ENCODE measurements at regions of chr10 and their contacts with region 1.

Region 1: DNA sequence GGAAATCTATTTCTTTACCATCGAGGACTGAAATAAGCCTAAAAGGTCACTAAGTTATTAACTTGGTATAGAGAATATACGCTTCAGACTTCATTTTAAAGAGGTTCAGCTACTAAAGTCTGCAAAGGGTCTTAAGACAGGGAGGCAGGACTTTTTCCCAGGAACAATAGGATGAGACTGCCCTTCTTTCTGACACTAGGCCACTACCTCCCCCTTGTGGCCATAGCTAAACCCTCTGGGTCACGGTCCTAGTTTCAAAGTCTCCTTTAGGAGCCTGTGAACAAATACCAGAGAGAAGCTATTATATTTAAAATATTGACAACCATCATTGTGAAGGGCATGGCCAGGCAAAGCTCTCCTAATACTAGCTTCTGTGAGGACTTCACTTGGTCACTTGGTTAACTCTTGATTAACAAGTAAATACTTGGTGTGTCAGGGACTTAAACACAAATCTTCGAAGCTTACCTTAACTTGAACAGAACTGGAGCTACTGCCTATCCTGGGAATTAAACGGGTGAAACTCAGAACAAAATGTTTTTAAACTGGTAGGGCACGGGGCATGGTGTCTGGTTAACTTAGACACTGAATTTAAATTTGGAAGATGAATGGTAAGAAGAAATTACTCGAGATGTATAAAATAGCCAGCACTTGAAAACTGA is 75.6 kb downstream of the CCDC6 start:
- DNase-seq: peak; percentile 29 to 70
- H3K4me3 ChIP-seq: no peak overlapping the region
- H3K27ac ChIP-seq: no peak overlapping the region
- H3K4me1 ChIP-seq: peaks cover 0 to 8% (median 3%) of the 10 kb centered on the region in 4 experiments; a peak in 3 of 7 replicates
- H3K27me3 ChIP-seq: no peaks in the 10 kb centered on the region
- CTCF ChIP-seq: peak; percentile 67 to 84 (median 78)
- EP300 ChIP-seq: no peak
- POLR2A ChIP-seq: no peak
- RAD21 ChIP-seq: peak; percentile 83

Region 2: GRCh38 chr10:59657724-59658123 is 173.0 kb before region 1 on chr10:
- CTCF ChIA-PET with region 1: no interaction called
- POLR2A ChIA-PET with region 1: no interaction called
- DNase-seq: no peak
- H3K4me3 ChIP-seq: no peak overlapping the region
- H3K27ac ChIP-seq: no peak overlapping the region
- H3K4me1 ChIP-seq: peaks cover 0 to 9% (median 7%) of the 10 kb centered on the region in 4 experiments; a peak in 3 of 7 replicates
- H3K27me3 ChIP-seq: no peaks in the 10 kb centered on the region; a peak in 1 of 7 replicates
- CTCF ChIP-seq: no peak
- EP300 ChIP-seq: no peak
- POLR2A ChIP-seq: no peak
- RAD21 ChIP-seq: no peak

Region 3: DNA sequence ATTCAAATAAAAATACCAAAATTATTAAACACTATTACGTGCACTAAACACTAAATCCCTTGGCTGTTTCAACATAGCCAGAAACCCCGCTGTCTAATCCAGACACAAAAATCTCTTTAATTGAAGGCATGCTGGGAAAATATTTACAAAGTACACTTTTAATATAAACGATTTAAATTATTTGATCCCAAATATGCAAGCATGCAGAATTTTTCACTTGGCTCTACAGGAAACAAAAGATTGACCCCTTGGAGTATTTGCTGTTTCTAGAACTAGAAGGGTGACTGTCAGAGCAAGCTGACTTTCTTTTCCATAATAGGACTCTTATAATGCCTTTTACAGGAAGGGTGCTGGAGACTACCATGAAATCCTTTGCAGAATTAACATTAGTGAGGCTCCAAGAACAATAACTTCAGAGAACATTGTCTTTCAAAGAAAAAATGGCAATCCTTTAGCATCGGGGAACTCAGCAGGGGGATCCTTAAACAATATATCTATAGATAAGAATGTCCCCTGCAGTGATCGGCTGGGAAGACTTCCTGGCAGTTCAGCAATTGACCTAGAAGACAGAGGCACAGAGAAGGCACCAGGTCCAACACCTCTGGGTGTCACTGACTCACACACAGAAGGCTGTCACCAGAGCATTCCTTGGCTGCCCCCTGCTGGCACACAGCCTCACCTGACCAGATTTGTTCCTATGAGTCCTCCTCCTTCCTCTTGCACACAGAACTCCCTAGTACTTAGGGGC is 21.7 kb before region 1 on chr10:
- CTCF ChIA-PET with region 1: interaction called, 26 read pairs
- POLR2A ChIA-PET with region 1: no interaction called
- DNase-seq: peak; percentile 43 to 72
- H3K4me3 ChIP-seq: no peak overlapping the region
- H3K27ac ChIP-seq: no peak overlapping the region
- H3K4me1 ChIP-seq: peaks cover 0 to 10% (median 2%) of the 10 kb centered on the region in 4 experiments; a peak in 5 of 7 replicates
- H3K27me3 ChIP-seq: no peaks in the 10 kb centered on the region; a peak in 1 of 7 replicates
- CTCF ChIP-seq: peak; percentile 58 to 87 (median 84)
- EP300 ChIP-seq: no peak
- POLR2A ChIP-seq: no peak
- RAD21 ChIP-seq: peak; percentile 64 to 71

Region 4: DNA sequence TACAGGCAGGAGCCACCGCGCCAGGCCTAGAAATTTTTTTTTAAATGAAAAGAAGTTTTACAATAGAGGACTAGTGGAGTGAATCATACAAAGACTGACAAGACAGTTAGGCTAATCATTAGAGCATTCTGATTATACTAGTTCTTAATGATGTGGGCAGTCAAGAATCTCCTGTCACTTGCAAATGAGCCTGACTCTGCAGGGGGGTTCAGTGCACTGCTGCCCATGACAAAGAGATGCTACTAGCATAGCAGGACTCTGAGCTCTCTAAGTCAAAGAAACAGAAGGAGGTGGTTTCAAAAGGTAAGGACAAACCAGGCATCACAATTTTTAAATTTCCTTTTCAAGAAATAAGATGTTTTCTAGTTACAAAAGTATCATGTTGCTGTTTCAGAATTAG is 16.6 kb after region 1 on chr10:
- CTCF ChIA-PET with region 1: interaction called, 68 read pairs
- POLR2A ChIA-PET with region 1: interaction called, 17 read pairs
- DNase-seq: peak; percentile 61 to 85
- H3K4me3 ChIP-seq: peak overlapping the region in 1 of 4 experiments; percentile 32; a peak in 2 of 8 replicates
- H3K27ac ChIP-seq: no peak overlapping the region
- H3K4me1 ChIP-seq: peaks cover 3 to 25% (median 16%) of the 10 kb centered on the region in 4 experiments
- H3K27me3 ChIP-seq: no peaks in the 10 kb centered on the region
- CTCF ChIP-seq: no peak
- EP300 ChIP-seq: peak in 1 of 2 experiments; percentile 58; a peak in 1 of 3 replicates
- POLR2A ChIP-seq: 0 out of 3 replicates have a peak, but pooled peaks of 1 of the 2 experiments have one; percentile 23
- RAD21 ChIP-seq: no peak

Region 5: DNA sequence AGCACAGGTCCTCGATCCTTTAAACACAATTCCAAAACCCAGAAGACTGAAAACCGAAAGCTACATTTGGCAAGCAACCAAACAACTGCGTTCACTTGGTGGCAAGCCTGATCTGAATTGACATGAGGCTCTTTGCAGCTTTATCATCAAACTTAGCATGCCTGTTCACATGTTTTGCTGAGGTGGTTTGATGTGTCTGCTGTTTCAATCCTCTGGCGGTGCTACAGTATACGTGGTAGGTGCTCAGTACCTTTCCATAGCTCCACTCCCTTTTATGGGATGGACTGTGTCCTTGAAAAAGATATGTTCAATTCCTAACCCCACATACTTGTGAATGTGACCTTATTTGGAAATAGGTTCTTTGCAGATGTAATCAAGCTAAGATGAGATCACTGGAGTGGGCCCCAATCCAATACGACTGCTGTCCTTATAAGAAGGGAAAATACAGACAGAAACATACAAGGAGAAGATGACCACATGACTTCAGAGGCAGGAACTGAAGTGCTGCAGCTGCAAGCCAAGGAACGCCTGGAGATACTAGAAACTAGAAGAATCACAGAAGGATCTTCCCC is 42.2 kb after region 1 on chr10:
- CTCF ChIA-PET with region 1: interaction called, 11 read pairs
- POLR2A ChIA-PET with region 1: no interaction called
- DNase-seq: no peak
- H3K4me3 ChIP-seq: no peak overlapping the region
- H3K27ac ChIP-seq: no peak overlapping the region
- H3K4me1 ChIP-seq: peaks cover 0 to 36% (median 18%) of the 10 kb centered on the region in 4 experiments; a peak in 4 of 7 replicates
- H3K27me3 ChIP-seq: no peaks in the 10 kb centered on the region
- CTCF ChIP-seq: no peak
- EP300 ChIP-seq: no peak
- POLR2A ChIP-seq: no peak
- RAD21 ChIP-seq: no peak

Region 6: DNA sequence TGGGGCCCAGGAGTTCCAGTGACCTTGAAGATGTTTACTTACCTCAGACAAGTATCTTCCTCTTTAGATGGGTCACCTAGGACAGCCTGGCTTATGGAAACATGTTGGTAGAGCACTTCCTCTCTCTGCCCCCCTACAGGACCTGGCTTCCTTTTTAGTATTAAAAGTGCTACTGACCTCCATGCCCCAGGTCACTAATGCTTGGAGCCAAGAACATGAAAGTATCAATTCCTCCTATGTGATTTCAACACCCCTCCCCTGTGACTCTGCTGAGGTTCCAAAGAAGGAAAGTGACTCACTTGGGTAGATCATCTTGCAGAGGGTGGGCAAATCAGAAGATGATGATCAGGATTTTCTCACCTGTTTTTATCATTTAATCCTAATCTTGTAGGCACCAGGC is 200.9 kb after region 1 on chr10:
- CTCF ChIA-PET with region 1: interaction called, 13 read pairs
- POLR2A ChIA-PET with region 1: no interaction called
- DNase-seq: no peak
- H3K4me3 ChIP-seq: no peak overlapping the region
- H3K27ac ChIP-seq: no peak overlapping the region
- H3K4me1 ChIP-seq: peaks cover 0 to 4% (median 1%) of the 10 kb centered on the region in 4 experiments; a peak in 3 of 7 replicates
- H3K27me3 ChIP-seq: no peaks in the 10 kb centered on the region
- CTCF ChIP-seq: no peak
- EP300 ChIP-seq: no peak
- POLR2A ChIP-seq: no peak
- RAD21 ChIP-seq: no peak

Region 7: DNA sequence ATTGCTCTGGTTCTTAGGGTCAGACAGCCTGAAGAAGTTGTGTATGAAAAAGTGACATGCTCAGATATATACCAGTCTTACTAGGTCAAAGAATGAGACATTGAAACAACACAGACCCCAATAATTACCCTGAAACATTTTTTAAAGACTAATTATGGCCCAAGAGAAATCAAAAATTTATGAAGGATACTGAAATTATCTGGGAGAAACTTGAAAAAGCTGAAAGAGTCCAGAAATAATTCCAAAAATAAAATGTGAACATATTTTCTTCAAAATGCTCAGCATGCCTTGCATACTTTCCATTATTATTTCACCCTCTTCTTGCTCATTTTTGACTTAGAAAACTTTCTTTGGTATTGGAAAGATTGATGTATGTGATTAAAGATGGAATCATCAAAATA is 274.6 kb after region 1 on chr10:
- CTCF ChIA-PET with region 1: no interaction called
- POLR2A ChIA-PET with region 1: no interaction called
- DNase-seq: no peak
- H3K4me3 ChIP-seq: no peak overlapping the region
- H3K27ac ChIP-seq: no peak overlapping the region
- H3K4me1 ChIP-seq: no peaks in the 10 kb centered on the region
- H3K27me3 ChIP-seq: no peaks in the 10 kb centered on the region
- CTCF ChIP-seq: no peak
- EP300 ChIP-seq: no peak
- POLR2A ChIP-seq: no peak
- RAD21 ChIP-seq: no peak

Measured in H1 (cell line).